ENCODE measurements at regions of chr10 and their contacts with region 1.

Region 1: DNA sequence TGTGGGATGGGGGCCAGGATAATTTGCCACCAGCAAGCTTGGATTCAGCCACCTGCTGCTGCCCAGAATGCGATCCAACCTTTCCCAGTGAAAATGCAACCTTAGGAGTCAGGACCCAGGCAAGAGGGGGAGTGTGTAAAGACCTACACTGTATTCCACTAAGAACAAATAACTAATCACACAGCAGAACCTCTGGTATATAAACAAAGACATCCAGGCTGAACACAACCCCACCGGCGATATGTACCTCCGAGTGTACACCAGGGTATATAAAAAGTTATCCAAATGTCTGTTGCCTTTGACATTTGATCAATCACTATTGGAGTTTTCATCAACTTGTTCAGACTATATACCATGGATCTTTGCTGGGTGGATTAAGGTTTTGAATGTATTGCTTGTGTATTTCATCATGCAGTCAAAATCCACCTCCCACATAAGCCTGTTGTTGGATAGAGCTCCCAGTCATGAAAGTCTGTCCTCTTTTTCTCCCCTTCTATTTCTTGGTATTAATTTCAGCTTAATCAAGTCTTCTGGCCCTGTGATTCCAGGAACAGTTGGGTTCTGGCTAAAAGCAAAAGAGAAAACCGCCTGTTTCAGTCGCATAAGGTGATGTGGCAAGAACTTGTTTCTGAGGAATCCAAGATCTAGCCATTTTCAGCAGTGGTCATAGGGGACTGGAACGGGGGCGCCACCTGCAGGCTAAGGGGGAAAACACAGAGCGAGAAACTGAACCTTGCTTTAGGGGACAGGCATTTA is 290.7 kb downstream of the CCDC3 start:
- DNase-seq: peak; percentile 62 to 75 (median 64)
- ATAC-seq: peak; percentile 90
- H3K4me3 ChIP-seq: no peak overlapping the region
- H3K27ac ChIP-seq: no peak overlapping the region
- H3K4me1 ChIP-seq: no peaks in the 10 kb centered on the region
- H3K27me3 ChIP-seq: peaks cover 0 to 4% of the 10 kb centered on the region in 2 experiments; a peak in 2 of 5 replicates
- CTCF ChIP-seq: peak; percentile 80 to 92 (median 89)
- EP300 ChIP-seq: peak; percentile 10; the same call in 1 of the 2 replicates
- POLR2A ChIP-seq: no peak
- RAD21 ChIP-seq: peak; percentile 75 to 81

Region 2: GRCh38 chr10:11782793-11783557 is 927.8 kb before region 1 on chr10:
- CTCF ChIA-PET with region 1: interaction called, 4 read pairs
- POLR2A ChIA-PET with region 1: no interaction called
- in situ Hi-C with region 1: loop called (anchors 25 kb)
- intact Hi-C with region 1: no loop called
- DNase-seq: peak; percentile 56 to 69 (median 60)
- ATAC-seq: peak; percentile 77
- H3K4me3 ChIP-seq: no peak overlapping the region
- H3K27ac ChIP-seq: no peak overlapping the region
- H3K4me1 ChIP-seq: peaks cover 3 to 4% of the 10 kb centered on the region in 2 experiments; a peak in 2 of 5 replicates
- H3K27me3 ChIP-seq: peaks cover 24 to 46% of the 10 kb centered on the region in 2 experiments
- CTCF ChIP-seq: peak; percentile 55 to 88 (median 73); a peak in 5 of 6 replicates
- EP300 ChIP-seq: no peak
- POLR2A ChIP-seq: no peak
- RAD21 ChIP-seq: peak; percentile 62 to 85

Region 3: DNA sequence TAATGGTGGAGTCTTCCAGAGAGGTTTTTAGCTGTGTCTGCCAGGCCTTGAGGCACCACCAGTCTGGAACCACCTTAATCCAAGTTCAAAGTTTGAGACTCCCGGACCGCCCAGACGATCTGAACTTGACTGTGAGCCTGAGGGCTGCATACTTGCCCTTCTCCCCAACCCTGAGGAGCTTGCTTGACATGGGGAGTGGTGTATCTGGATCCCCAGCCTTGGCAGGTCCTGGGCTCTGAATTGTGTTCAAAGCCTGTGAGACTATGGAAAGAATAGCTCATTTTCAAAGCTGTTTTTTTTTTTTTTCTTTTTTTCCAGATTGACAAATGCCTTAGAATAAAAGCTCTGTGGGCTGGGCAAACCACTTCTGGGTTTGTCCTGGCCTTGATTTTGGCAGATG is 383.7 kb before region 1 on chr10:
- CTCF ChIA-PET with region 1: no interaction called
- POLR2A ChIA-PET with region 1: no interaction called
- in situ Hi-C with region 1: no loop called
- intact Hi-C with region 1: loop called (anchors 5 kb)
- DNase-seq: no peak
- ATAC-seq: no peak
- H3K4me3 ChIP-seq: no peak overlapping the region
- H3K27ac ChIP-seq: no peak overlapping the region
- H3K4me1 ChIP-seq: no peaks in the 10 kb centered on the region; a peak in 1 of 5 replicates
- H3K27me3 ChIP-seq: peaks cover 7 to 28% of the 10 kb centered on the region in 2 experiments; a peak in 4 of 5 replicates
- CTCF ChIP-seq: no peak
- EP300 ChIP-seq: no peak
- POLR2A ChIP-seq: no peak
- RAD21 ChIP-seq: no peak

Region 4: DNA sequence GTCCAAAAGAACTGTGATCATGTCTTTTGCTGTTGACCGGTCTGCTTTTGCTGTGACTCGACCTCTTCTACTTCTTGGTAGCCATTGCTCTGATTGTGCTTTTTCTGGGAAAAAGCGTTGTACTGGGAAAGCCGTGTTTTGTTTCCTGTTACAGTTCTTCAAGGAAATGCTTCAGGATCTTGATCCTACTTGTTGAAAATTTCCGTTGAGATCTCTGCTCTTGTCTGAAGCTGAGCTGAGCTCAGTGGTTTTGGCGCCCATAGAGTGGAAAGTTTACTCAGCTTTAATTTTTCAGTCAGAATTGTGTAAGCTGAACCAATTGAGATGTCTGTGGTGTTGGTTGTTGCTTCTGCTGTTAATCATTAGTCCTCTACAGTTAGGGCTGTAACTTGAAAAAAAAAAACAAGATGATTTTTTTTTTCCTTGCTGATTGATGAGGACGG is 11.5 kb before region 1 on chr10:
- CTCF ChIA-PET with region 1: no interaction called
- POLR2A ChIA-PET with region 1: no interaction called
- in situ Hi-C with region 1: no loop called
- intact Hi-C with region 1: no loop called
- DNase-seq: no peak
- ATAC-seq: no peak
- H3K4me3 ChIP-seq: no peak overlapping the region
- H3K27ac ChIP-seq: no peak overlapping the region
- H3K4me1 ChIP-seq: no peaks in the 10 kb centered on the region
- H3K27me3 ChIP-seq: peaks cover 22 to 30% of the 10 kb centered on the region in 2 experiments; a peak in 4 of 5 replicates
- CTCF ChIP-seq: no peak
- EP300 ChIP-seq: no peak
- POLR2A ChIP-seq: no peak
- RAD21 ChIP-seq: no peak

Region 5: DNA sequence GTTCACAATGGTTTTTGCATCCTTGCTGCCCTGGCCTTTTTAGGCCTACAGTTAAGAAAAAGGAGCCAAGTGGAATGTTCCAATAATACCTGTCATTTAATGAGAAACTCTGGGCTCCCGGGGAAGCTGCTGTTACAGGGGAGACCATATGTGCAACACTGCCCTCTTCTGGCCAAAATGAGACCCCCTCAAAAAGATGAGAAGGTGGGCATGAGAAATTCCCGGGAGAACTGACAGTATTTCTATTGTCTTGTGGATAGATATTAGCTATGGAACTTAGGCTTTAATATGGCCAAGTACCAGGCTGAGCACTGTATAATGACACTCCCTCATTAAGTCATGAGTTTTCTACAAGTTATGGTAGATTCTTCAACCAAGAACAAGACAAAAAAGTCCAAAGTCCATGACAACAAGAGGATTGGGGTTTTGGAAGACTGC is 191.4 kb after region 1 on chr10:
- CTCF ChIA-PET with region 1: no interaction called
- POLR2A ChIA-PET with region 1: no interaction called
- in situ Hi-C with region 1: no loop called
- intact Hi-C with region 1: loop called (anchors 10 kb)
- DNase-seq: peak; percentile 62 to 69 (median 65)
- ATAC-seq: peak; percentile 75
- H3K4me3 ChIP-seq: no peak overlapping the region
- H3K27ac ChIP-seq: no peak overlapping the region
- H3K4me1 ChIP-seq: no peaks in the 10 kb centered on the region
- H3K27me3 ChIP-seq: peaks cover 11 to 40% of the 10 kb centered on the region in 2 experiments
- CTCF ChIP-seq: peak; percentile 63 to 78 (median 75)
- EP300 ChIP-seq: no peak
- POLR2A ChIP-seq: no peak
- RAD21 ChIP-seq: peak; percentile 44 to 65

Region 6: GRCh38 chr10:13074561-13075451 is 364.0 kb after region 1 on chr10:
- CTCF ChIA-PET with region 1: interaction called, 4 read pairs
- POLR2A ChIA-PET with region 1: no interaction called
- in situ Hi-C with region 1: loop called (anchors 10 kb)
- intact Hi-C with region 1: loop called (anchors 5 kb)
- DNase-seq: peak; percentile 71 to 75 (median 74)
- ATAC-seq: peak; percentile 97
- H3K4me3 ChIP-seq: no peak overlapping the region
- H3K27ac ChIP-seq: no peak overlapping the region
- H3K4me1 ChIP-seq: no peaks in the 10 kb centered on the region
- H3K27me3 ChIP-seq: no peaks in the 10 kb centered on the region; a peak in 2 of 5 replicates
- CTCF ChIP-seq: peak; percentile 85 to 90 (median 88)
- EP300 ChIP-seq: no peak
- POLR2A ChIP-seq: no peak
- RAD21 ChIP-seq: peak; percentile 73 to 89